ENCODE measurements at regions of chr17 and their contacts with region 1.

Region 1: GRCh38 chr17:41548844-41549595 is 20.9 kb upstream of the KRT19 start:
- DNase-seq: peak; percentile 93
- ATAC-seq: peak; percentile 86
- H3K4me3 Mint-ChIP-seq: peak overlapping the region; percentile 24
- H3K27ac Mint-ChIP-seq: peak overlapping the region; percentile 70
- H3K4me1 Mint-ChIP-seq: peaks cover 20% of the 10 kb centered on the region
- H3K27me3 Mint-ChIP-seq: peaks cover 2% of the 10 kb centered on the region
- CTCF ChIP-seq: peak; percentile 98

Region 2: DNA sequence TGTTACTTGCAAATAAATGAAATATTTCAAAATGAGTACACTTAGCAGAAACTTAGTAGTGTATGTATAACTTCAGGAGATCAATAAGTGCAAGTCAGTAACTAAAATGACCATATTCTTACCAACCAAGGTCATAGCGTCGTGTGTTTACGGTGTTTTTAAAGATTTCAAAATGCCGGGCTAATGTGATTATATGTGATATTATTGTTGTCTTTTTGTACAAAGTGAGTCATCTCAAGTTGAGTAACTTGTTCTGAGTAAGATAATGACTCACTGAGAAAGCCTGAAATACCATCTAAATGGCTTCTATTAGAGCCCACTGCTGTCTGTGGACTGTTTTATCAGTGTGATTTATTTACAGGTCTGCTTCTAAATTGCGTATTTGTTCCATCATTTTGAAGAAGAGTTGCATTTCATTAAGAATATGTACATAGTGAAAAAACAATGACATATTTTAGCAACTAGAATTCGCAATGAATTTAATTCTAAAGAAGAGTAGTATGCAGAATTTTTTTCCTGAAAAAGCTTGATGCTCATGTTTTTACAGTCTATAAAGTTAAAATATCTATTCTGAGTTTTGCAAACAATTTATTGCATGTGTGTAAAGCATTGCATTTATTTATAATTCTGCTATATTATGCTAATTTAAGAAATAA is 694.7 kb before region 1 on chr17:
- CTCF ChIA-PET with region 1: interaction called, 11 read pairs
- POLR2A ChIA-PET with region 1: no interaction called
- intact Hi-C with region 1: no loop called
- DNase-seq: no peak
- ATAC-seq: no peak
- H3K4me3 Mint-ChIP-seq: no peak overlapping the region
- H3K27ac Mint-ChIP-seq: no peak overlapping the region
- H3K4me1 Mint-ChIP-seq: peaks cover 3% of the 10 kb centered on the region
- H3K27me3 Mint-ChIP-seq: peaks cover 19% of the 10 kb centered on the region
- CTCF ChIP-seq: no peak

Region 3: DNA sequence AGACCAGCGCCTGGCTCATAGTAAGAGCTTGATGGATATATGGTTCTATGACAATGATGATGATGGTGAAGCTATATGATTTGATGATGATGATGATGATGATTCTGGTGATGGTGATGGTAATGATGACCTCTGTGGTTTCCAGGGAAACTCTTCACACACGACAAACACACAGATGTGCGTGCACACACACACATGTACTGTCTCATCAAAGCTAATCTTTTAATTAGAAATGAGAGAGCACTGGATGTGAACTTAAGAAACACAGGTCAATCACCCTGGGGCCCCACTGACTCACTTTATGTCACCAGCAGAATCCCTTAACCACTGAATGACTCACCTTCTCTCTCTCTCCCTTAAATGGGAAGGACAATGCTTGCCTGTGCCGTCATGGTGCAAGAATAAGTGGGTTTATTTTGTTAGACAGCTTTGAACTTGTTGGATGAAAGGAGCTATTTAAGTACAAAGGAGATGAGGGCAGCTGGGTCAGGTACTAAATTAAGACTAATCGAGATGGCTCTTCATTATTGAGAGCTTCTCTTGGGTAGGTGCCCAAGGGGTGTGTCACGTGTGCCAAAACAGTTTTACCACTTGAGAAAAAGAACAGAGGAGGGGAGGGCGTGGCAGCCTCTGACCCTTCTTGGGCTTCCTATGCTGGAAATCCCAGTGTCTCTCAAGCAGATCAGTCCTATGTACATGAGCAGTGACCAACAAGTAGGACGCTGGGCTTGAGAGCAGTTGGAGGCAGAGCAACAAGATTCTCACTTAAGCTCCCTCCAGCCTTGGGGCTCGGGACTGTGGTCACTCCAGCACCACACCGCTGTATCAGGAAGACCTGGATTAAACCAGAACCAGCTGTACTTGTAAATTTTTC is 145.0 kb before region 1 on chr17:
- CTCF ChIA-PET with region 1: interaction called, 18 read pairs
- POLR2A ChIA-PET with region 1: no interaction called
- intact Hi-C with region 1: no loop called
- DNase-seq: peak; percentile 89
- ATAC-seq: peak; percentile 90
- H3K4me3 Mint-ChIP-seq: no peak overlapping the region
- H3K27ac Mint-ChIP-seq: peak overlapping the region; percentile 70
- H3K4me1 Mint-ChIP-seq: peaks cover 36% of the 10 kb centered on the region
- H3K27me3 Mint-ChIP-seq: no peaks in the 10 kb centered on the region
- CTCF ChIP-seq: no peak

Region 4: DNA sequence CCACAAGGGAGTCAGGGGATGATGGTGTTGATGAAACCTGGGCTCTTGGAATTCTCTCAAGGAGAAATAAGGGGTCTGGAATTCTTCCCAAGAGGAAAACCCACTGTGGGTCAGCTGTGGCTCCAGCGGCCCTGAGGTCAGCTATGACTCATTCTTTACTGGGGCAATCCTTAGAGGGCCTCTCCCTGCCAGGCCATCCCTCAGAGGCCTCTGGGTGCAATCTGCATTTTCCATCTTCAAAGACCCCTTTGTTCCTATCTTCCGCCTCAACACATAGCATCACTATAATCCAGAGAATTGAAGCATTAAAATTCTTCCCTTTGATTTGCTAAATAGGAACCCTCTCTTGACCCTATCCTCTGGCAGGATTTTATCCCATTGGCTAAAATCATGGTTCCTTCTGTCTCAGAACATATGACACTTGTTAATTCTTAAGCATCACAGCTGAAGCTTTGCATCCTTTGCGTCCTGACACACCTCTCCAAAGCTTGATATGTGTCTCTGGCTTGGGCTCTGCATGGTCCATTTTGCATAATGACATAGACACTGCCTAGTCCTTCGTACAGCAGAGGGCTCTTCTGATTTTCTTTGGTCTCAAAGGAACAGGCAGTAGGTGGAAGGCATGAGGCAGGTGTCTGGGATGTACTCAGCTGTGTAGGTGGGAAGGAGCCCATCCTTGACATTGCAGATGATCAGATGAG is 120.3 kb before region 1 on chr17:
- CTCF ChIA-PET with region 1: no interaction called
- POLR2A ChIA-PET with region 1: no interaction called
- intact Hi-C with region 1: no loop called
- DNase-seq: no peak
- ATAC-seq: no peak
- H3K4me3 Mint-ChIP-seq: no peak overlapping the region
- H3K27ac Mint-ChIP-seq: no peak overlapping the region
- H3K4me1 Mint-ChIP-seq: no peaks in the 10 kb centered on the region
- H3K27me3 Mint-ChIP-seq: peaks cover 3% of the 10 kb centered on the region
- CTCF ChIP-seq: no peak

Region 5: DNA sequence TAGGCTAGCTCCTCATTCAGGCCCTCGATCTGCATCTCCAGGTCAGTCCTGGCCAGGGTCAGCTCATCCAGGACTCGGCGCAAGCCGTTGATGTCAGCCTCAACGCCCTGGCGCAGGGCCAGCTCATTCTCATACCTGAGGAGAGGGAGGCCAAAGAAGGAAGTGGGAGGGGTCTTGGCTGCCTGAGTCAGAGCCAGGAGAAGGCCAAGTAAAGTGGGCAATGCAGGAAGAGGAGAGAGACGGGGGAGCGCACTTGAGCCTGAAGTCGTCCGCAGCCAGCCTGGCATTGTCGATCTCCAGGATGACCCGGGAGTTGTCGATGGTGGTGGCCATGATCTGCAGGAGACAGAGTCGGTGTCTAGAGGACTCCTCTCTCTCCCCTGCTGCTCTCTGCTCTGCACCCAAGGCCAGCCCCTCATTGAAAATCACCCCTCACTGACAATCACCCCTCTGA is 32.2 kb before region 1 on chr17:
- CTCF ChIA-PET with region 1: interaction called, 11 read pairs
- POLR2A ChIA-PET with region 1: no interaction called
- intact Hi-C with region 1: no loop called
- DNase-seq: no peak
- ATAC-seq: no peak
- H3K4me3 Mint-ChIP-seq: no peak overlapping the region
- H3K27ac Mint-ChIP-seq: no peak overlapping the region
- H3K4me1 Mint-ChIP-seq: no peaks in the 10 kb centered on the region
- H3K27me3 Mint-ChIP-seq: no peaks in the 10 kb centered on the region
- CTCF ChIP-seq: no peak

Region 6: DNA sequence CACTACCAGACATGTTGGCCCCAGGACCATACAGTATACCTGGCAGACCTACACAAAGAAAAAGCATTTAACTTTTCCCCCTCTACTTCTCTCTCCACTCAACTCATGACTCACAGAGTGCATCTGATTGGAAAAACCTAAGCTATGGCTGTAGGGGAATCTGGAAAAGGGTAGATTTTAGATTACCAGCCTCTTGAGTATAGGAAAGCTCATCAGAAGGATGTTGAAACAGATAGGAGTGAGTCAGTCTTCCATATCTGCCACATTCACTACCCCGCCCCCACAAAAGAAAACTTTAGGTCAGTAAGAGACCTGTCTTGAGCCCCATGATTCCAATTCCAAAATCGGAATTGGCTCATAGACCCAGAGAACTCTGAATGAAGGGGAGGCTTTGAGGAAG is 10.5 kb after region 1 on chr17:
- CTCF ChIA-PET with region 1: interaction called, 53 read pairs
- POLR2A ChIA-PET with region 1: interaction called, 4 read pairs
- intact Hi-C with region 1: no loop called
- DNase-seq: no peak
- ATAC-seq: no peak
- H3K4me3 Mint-ChIP-seq: no peak overlapping the region
- H3K27ac Mint-ChIP-seq: no peak overlapping the region
- H3K4me1 Mint-ChIP-seq: no peaks in the 10 kb centered on the region
- H3K27me3 Mint-ChIP-seq: peaks cover 35% of the 10 kb centered on the region
- CTCF ChIP-seq: no peak

Region 7: GRCh38 chr17:41586863-41587495 is 38.0 kb after region 1 on chr17 and contains the start of gene KRT14:
- CTCF ChIA-PET with region 1: interaction called, 12 read pairs
- POLR2A ChIA-PET with region 1: no interaction called
- intact Hi-C with region 1: no loop called
- DNase-seq: no peak
- ATAC-seq: no peak
- H3K4me3 Mint-ChIP-seq: no peak within 1 kb of the TSS
- H3K27ac Mint-ChIP-seq: no peak within 1 kb of the TSS
- H3K4me1 Mint-ChIP-seq: no peaks in the 10 kb centered on the region
- H3K27me3 Mint-ChIP-seq: peaks cover 14% of the 10 kb centered on the region
- CTCF ChIP-seq: no peak
- total RNA-seq, gene KRT14: not detected

Region 8: DNA sequence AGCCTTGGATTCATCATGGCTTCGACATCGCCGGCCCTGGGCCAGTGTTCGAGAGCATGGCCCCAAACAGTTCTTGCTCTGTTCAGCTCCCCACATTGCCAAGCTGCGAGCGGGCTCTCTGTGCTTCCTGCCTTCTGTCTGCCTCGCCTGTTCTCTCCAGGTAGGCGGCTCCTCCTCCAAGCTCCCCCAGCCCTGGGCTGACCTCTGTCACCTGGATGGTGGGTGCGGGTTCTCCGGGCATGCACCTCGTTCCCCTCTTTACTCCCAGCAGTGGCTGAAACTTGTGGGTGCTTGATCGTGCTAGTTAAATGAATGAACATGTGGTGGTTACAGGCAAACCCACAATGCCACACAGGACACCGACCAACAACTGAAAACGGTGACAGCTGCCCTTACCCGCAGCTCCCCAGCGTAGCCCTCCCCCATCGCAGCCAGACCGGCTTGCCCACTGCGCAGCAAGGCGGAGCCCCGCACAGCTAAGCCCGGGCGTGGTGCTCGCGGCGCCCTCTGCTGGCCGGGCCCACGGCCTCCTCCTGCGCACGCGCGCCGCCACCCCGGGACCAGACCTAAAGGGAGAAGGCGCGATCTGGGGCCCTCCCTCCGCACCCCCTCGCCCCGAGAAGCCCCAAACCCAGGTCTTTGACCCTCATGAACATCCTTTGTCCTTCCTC is 116.7 kb after region 1 on chr17:
- CTCF ChIA-PET with region 1: interaction called, 190 read pairs
- POLR2A ChIA-PET with region 1: interaction called, 3 read pairs
- intact Hi-C with region 1: no loop called
- DNase-seq: peak; percentile 92
- ATAC-seq: peak; percentile 81
- H3K4me3 Mint-ChIP-seq: peak overlapping the region; percentile 81
- H3K27ac Mint-ChIP-seq: peak overlapping the region; percentile 100
- H3K4me1 Mint-ChIP-seq: peaks cover 33% of the 10 kb centered on the region
- H3K27me3 Mint-ChIP-seq: peaks cover 1% of the 10 kb centered on the region
- CTCF ChIP-seq: peak; percentile 95

Measured in activated CD8-positive, alpha-beta T cell treated with anti-CD3 and anti-CD28 coated beads for 36 hours (primary cell).